Activated T-helper 1 cell treated with anti-CD3 and anti-CD28 coated beads, Interleukin-12 subunit alpha, Interleukin-12 subunit beta, Interleukin-2, Interleukin-4 antibody, amounts not matched to agents 30 ng/mL and 10 ng/mL and 1 ng/mL, durations not matched to agents 14 hours and 24 hours and 36 hours (primary cell): ENCODE measurements at regions of chr3 and their contacts with region 1.

Region 1: GRCh38 chr3:18740631-18741583 is 315.8 kb upstream of the SATB1 start:
- DNase-seq: peak; percentile 62
- H3K4me3 Mint-ChIP-seq: peak overlapping the region; percentile 50
- H3K27ac Mint-ChIP-seq: peak overlapping the region; percentile 90
- H3K4me1 Mint-ChIP-seq: peaks cover 92% of the 10 kb centered on the region
- H3K27me3 Mint-ChIP-seq: no peaks in the 10 kb centered on the region

Region 2: DNA sequence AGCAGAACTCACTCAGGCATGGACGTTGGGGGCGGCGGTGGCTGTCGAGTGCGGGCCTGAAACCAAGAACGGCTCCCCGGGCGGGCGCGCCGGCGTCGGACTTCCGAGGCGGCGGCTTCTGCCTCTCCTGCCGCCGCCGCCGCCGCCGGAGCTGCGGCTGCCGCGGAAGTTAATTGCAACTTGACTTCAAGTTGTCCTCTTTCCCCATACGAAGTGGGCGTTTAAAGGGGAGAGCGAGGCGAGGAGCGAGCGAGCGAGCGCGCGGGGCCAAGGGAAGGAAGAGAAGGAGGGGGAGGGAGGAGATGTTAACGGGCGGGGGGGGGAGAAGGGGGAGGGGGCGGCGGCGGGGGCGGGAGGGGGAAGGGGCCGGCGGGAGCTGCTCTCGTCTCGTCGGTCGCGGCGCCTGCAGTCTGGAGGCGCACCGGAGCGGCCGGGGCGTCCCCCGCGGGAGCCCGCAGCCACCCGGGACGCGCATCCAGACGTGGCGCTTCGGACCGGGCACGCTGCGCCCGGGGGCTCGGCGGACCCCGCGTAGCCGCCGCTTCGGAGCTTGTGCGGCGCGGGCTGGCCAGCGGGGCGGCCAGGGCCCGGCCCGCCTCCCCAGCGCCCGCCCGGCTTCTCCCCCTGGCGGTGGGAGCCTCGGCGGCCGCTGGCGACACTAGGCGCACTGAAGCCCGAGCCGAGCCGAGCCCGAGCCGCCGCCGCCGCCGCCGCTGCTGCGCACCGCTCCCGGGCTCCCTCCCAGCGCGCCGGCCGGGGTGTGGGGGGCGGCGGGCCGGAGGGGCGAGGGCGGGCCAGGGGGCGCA is 296.1 kb before region 1 on chr3:
- intact Hi-C with region 1: loop called (anchors 1 kb)
- DNase-seq: peak; percentile 75
- H3K4me3 Mint-ChIP-seq: peak overlapping the region; percentile 99
- H3K27ac Mint-ChIP-seq: peak overlapping the region; percentile 97
- H3K4me1 Mint-ChIP-seq: peaks cover 54% of the 10 kb centered on the region
- H3K27me3 Mint-ChIP-seq: peaks cover 1% of the 10 kb centered on the region

Region 3: DNA sequence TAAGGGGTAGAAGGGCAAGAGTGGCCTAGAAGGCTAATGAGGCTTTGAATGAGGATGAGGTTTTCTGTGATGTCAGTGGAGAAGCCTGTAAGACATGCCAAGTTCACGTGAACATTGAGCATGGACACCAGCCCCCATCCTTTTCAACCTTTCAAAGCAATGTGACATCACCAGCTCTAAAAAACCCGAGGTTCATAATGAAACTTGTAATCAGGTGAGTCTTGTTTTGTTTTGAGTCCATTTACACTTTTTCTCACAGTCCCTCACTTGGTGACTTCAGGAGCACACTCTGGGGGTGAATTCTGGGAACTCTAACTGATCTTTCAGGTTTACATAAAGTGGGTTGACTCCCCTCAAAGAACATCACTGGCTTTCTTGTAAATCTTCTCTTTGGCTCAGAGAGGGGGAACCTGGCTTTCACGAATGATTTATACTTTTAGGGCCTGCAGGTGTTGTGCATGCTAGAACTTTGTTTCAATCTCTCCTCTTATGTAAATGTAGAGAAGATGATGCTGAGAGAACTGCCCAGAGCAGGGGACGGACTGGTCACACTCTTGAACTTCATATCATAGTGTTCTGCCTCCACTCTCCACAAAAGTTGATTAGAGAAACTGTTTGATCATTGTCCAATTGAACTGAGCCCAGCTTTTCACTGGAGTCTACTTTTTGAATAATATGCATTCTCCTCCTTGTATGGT is 91.1 kb before region 1 on chr3:
- intact Hi-C with region 1: loop called (anchors 1 kb)
- DNase-seq: peak; percentile 70
- H3K4me3 Mint-ChIP-seq: peak overlapping the region; percentile 59
- H3K27ac Mint-ChIP-seq: peak overlapping the region; percentile 94
- H3K4me1 Mint-ChIP-seq: peaks cover 94% of the 10 kb centered on the region
- H3K27me3 Mint-ChIP-seq: no peaks in the 10 kb centered on the region

Region 4: DNA sequence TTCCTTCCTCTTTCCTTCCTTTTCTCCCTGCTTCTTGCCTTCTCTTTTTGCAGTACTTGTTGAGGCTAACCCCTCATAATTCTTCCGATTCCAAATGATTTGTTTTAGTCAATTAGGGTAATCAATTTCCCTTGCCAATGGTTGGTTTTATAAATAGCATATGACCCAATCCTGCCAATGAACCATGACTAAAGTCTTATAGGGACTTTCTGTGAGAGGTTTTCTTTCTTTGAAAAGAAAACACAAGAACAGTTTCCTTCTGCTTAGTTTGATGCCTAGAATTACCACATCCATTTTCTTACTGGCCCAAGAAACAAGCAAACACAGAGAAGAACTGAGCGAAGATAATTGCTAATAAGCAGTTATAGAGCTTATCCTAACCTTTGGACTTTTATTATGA is 23.3 kb before region 1 on chr3:
- intact Hi-C with region 1: loop called (anchors 1 kb)
- DNase-seq: no peak
- H3K4me3 Mint-ChIP-seq: peak overlapping the region; percentile 64
- H3K27ac Mint-ChIP-seq: peak overlapping the region; percentile 98
- H3K4me1 Mint-ChIP-seq: peaks cover 67% of the 10 kb centered on the region
- H3K27me3 Mint-ChIP-seq: no peaks in the 10 kb centered on the region

Region 5: DNA sequence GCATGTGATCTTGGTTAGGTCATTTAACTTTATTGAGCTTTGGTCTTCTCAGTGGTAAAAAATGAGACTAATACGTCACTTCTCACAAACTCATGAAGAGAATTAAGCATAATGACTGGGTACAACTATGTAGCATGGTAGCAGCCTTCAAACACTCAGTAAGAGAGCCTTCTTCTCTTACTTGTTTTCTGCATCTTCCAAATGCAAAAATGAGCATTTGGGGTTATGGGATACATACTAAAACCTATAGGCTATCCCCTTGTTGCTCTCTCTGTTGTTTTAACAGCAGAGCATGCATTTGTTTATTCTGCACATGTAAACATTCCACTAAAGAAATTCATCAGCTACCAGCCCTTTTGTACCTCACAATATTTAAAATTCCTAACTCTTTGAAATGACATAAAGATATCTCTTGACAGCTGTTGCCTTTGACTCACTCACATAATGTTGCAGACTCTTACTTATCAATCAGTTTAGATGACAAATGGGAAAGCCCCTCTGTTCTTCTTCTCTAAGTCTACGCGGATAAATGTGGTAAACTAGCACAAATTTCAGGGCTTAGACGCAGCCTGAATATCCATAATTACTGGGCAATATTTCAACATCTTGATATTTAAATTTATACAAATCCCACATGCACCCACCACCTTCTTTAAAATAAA is 11.5 kb after region 1 on chr3:
- intact Hi-C with region 1: loop called (anchors 1 kb)
- DNase-seq: no peak
- H3K4me3 Mint-ChIP-seq: no peak overlapping the region
- H3K27ac Mint-ChIP-seq: no peak overlapping the region
- H3K4me1 Mint-ChIP-seq: peaks cover 78% of the 10 kb centered on the region
- H3K27me3 Mint-ChIP-seq: no peaks in the 10 kb centered on the region

Region 6: GRCh38 chr3:18787441-18787840 is 46.5 kb after region 1 on chr3:
- intact Hi-C with region 1: loop called (anchors 1 kb)
- DNase-seq: no peak
- H3K4me3 Mint-ChIP-seq: no peak overlapping the region
- H3K27ac Mint-ChIP-seq: no peak overlapping the region
- H3K4me1 Mint-ChIP-seq: peaks cover 8% of the 10 kb centered on the region
- H3K27me3 Mint-ChIP-seq: peaks cover 3% of the 10 kb centered on the region

Region 7: GRCh38 chr3:20185701-20186598 is 1445.0 kb after region 1 on chr3 and contains the start of gene SGO1:
- intact Hi-C with region 1: loop called (anchors 10 kb)
- DNase-seq: peak; percentile 100
- H3K4me3 Mint-ChIP-seq: no peak within 1 kb of the TSS
- H3K27ac Mint-ChIP-seq: no peak within 1 kb of the TSS
- H3K4me1 Mint-ChIP-seq: no peaks in the 10 kb centered on the region
- H3K27me3 Mint-ChIP-seq: no peaks in the 10 kb centered on the region
- total RNA-seq, gene SGO1: 17.8 and 18.3 TPM in 2 replicates